Caco-2 (cell line): ENCODE measurements at regions of chr3 and their contacts with region 1.

Region 1: GRCh38 chr3:133670525-133670995 is 8.8 kb upstream of the TOPBP1 start:
- DNase-seq: peak; percentile 65 to 67
- H3K4me3 ChIP-seq: no peak overlapping the region
- H3K4me3 Mint-ChIP-seq: peak overlapping the region; percentile 60
- H3K27ac Mint-ChIP-seq: peak overlapping the region; percentile 92
- H3K4me1 ChIP-seq: peaks cover 42% of the 10 kb centered on the region
- H3K4me1 Mint-ChIP-seq: peaks cover 35% of the 10 kb centered on the region
- H3K27me3 ChIP-seq: no peaks in the 10 kb centered on the region
- H3K27me3 Mint-ChIP-seq: no peaks in the 10 kb centered on the region
- CTCF ChIP-seq: no peak

Region 2: GRCh38 chr3:133691410-133692107 is 21.0 kb after region 1 on chr3:
- CTCF ChIA-PET with region 1: no interaction called
- POLR2A ChIA-PET with region 1: no interaction called
- intact Hi-C with region 1: no loop called
- DNase-seq: no peak
- H3K4me3 ChIP-seq: no peak overlapping the region
- H3K4me3 Mint-ChIP-seq: no peak overlapping the region
- H3K27ac Mint-ChIP-seq: no peak overlapping the region
- H3K4me1 ChIP-seq: no peaks in the 10 kb centered on the region
- H3K4me1 Mint-ChIP-seq: no peaks in the 10 kb centered on the region
- H3K27me3 ChIP-seq: no peaks in the 10 kb centered on the region
- H3K27me3 Mint-ChIP-seq: no peaks in the 10 kb centered on the region
- CTCF ChIP-seq: no peak

Region 3: GRCh38 chr3:133711036-133711435 is 40.5 kb after region 1 on chr3:
- CTCF ChIA-PET with region 1: no interaction called
- POLR2A ChIA-PET with region 1: no interaction called
- intact Hi-C with region 1: loop called (anchors 1 kb)
- DNase-seq: peak in 1 of 2 experiments; percentile 55
- H3K4me3 ChIP-seq: no peak overlapping the region
- H3K4me3 Mint-ChIP-seq: peak overlapping the region; percentile 10
- H3K27ac Mint-ChIP-seq: no peak overlapping the region
- H3K4me1 ChIP-seq: no peaks in the 10 kb centered on the region
- H3K4me1 Mint-ChIP-seq: peaks cover 19% of the 10 kb centered on the region
- H3K27me3 ChIP-seq: no peaks in the 10 kb centered on the region
- H3K27me3 Mint-ChIP-seq: no peaks in the 10 kb centered on the region
- CTCF ChIP-seq: no peak

Region 4: GRCh38 chr3:133742351-133743091 is 72.0 kb after region 1 on chr3:
- CTCF ChIA-PET with region 1: no interaction called
- POLR2A ChIA-PET with region 1: no interaction called
- intact Hi-C with region 1: loop called (anchors 2 kb)
- DNase-seq: peak; percentile 46 to 62
- H3K4me3 ChIP-seq: no peak overlapping the region
- H3K4me3 Mint-ChIP-seq: no peak overlapping the region
- H3K27ac Mint-ChIP-seq: no peak overlapping the region
- H3K4me1 ChIP-seq: peaks cover 16% of the 10 kb centered on the region; the same call in 1 of the 2 replicates
- H3K4me1 Mint-ChIP-seq: peaks cover 7% of the 10 kb centered on the region
- H3K27me3 ChIP-seq: no peaks in the 10 kb centered on the region
- H3K27me3 Mint-ChIP-seq: no peaks in the 10 kb centered on the region
- CTCF ChIP-seq: peak in 1 of 2 experiments; percentile 12

Region 5: GRCh38 chr3:133865136-133865855 is 194.7 kb after region 1 on chr3:
- CTCF ChIA-PET with region 1: no interaction called
- POLR2A ChIA-PET with region 1: no interaction called
- intact Hi-C with region 1: no loop called
- DNase-seq: no peak
- H3K4me3 ChIP-seq: no peak overlapping the region
- H3K4me3 Mint-ChIP-seq: no peak overlapping the region
- H3K27ac Mint-ChIP-seq: no peak overlapping the region
- H3K4me1 ChIP-seq: no peaks in the 10 kb centered on the region
- H3K4me1 Mint-ChIP-seq: no peaks in the 10 kb centered on the region
- H3K27me3 ChIP-seq: no peaks in the 10 kb centered on the region
- H3K27me3 Mint-ChIP-seq: no peaks in the 10 kb centered on the region
- CTCF ChIP-seq: peak in 1 of 2 experiments; percentile 33